ENCODE measurements at regions of chr6 and their contacts with region 1.

Region 1: DNA sequence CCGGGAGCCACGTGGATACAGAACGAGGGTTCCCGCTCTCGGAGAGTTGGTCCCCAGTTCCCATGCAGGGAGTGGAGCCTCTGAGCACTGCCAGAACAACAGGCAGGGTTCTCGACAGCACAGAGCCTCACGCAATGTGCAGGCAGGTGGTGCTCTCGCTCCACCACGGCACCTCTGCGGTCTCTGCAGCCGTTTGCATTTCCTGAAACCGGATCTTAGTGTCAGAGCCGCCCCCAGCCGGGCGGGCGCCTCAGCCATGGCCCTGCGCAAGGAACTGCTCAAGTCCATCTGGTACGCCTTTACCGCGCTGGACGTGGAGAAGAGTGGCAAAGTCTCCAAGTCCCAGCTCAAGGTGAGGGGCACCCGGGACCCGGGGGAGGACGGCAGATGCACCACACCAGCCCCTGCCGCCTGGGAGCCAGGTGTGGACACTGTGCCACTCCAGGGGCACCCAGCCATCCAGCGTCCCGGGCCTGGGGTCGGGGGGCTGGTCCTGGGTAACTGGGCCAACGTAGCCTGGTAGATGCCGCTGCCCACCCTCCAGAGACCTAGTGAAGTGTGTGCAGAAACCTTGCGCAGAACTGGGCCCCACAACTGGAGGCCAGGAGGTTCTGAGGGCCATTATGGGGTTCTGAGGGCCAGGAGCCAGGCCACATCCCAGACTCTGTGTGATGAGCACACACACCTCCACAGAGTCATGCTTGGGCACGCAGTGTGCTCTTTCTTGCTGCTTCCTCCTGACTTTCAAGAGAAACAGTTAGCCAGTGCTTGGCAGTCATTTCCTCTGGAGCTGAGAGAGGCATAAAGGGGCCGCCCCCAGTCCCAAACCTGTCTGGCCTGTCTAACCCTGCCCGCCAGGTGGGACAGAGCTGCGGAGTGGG is at the start of gene DEF6:
- DNase-seq: peak; percentile 90
- H3K4me3 ChIP-seq: peak within 1 kb of the TSS; percentile 66 to 85 (median 76)
- H3K27ac ChIP-seq: peak within 1 kb of the TSS; percentile 80
- H3K4me1 ChIP-seq: peaks cover 35% of the 10 kb centered on the region
- H3K27me3 ChIP-seq: no peaks in the 10 kb centered on the region
- CTCF ChIP-seq: peak; percentile 92 to 98
- total RNA-seq, gene DEF6: 12.8 to 32.9 TPM

Region 2: DNA sequence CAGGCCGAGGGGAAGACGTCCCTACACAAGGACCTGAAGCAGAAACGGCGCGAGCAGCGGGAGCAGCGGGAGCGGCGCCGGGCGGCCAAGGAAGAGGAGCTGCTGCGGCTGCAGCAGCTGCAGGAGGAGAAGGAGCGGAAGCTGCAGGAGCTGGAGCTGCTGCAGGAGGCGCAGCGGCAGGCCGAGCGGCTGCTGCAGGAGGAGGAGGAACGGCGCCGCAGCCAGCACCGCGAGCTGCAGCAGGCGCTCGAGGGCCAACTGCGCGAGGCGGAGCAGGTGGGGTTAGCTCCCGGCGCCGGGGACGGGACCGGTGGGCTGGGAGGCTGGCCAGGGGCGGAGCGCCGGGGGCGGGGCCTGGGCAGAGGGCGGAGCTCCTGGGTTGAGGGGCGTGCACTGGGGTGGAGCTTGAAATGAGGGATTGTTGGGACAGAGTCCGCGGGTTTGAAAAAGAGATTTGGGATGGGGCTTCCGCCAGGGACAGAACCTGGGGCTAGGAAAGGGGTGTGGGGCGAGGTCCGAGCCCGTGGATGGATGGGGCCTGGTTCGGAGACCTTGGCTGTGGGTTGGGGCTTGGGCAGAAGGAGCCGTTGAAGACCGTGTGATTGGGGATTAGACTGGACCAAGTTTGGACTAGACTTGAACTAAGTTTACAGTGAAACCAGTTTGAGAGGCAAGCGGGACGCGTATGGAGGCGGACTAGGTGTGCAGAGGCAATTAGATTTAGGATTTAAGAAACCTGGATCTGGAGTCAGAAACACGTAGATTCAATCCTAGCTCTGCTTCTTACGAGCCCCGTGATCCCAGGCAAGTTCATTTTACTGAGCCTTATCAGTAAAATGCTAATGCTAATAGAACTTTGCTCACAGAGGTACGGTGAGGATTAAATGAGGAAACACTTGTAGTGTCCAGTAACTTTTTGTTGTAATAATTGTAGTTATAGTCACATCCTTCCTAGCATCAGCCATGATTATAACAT is 20.6 kb after region 1 on chr6:
- CTCF ChIA-PET with region 1: no interaction called
- dilution Hi-C with region 1: no loop called
- in situ Hi-C with region 1: no loop called
- intact Hi-C with region 1: loop called (anchors 2 kb)
- DNase-seq: no peak
- H3K4me3 ChIP-seq: peak overlapping the region; percentile 0 to 30 (median 23)
- H3K27ac ChIP-seq: no peak overlapping the region
- H3K4me1 ChIP-seq: peaks cover 7% of the 10 kb centered on the region
- H3K27me3 ChIP-seq: no peaks in the 10 kb centered on the region
- CTCF ChIP-seq: no peak

Region 3: DNA sequence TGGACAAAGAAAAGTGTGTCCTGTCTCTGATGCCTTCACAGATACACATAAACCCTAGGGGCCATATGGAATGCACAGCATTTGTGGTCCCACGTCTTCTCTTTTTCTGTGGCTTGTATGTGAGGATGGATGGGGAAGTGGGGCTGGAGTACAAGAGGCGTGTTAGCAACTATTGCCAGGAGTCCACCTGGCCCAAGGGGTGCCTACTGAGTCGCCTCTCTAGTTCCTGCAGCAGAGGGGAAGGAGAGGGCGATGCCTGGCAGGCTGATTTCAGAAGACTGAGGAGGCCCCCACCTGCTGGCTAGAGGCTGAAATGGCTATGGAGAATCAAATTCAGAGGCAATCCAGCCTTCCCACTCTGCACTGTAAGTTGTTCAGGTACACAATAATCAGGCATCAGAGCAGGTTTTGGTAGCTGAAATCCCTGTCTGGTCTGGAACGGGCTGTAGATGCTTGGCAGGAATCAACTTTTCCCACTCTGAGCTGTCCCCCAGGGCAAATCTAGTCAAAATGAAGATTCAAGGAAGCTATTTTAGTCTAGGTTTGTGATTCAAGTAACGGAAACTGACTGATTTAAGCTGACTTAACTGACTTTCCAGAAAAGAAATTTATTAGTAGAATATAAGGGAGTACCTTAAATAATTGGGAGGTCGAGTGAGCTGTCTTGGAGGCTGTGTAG is 29.6 kb after region 1 on chr6:
- CTCF ChIA-PET with region 1: no interaction called
- dilution Hi-C with region 1: no loop called
- in situ Hi-C with region 1: no loop called
- intact Hi-C with region 1: loop called (anchors 1 kb)
- DNase-seq: peak; percentile 36
- H3K4me3 ChIP-seq: no peak overlapping the region
- H3K27ac ChIP-seq: no peak overlapping the region
- H3K4me1 ChIP-seq: no peaks in the 10 kb centered on the region
- H3K27me3 ChIP-seq: no peaks in the 10 kb centered on the region
- CTCF ChIP-seq: peak; percentile 47 to 74

Region 4: GRCh38 chr6:35552285-35552917 is 254.6 kb after region 1 on chr6:
- CTCF ChIA-PET with region 1: no interaction called
- dilution Hi-C with region 1: no loop called
- in situ Hi-C with region 1: no loop called
- intact Hi-C with region 1: loop called (anchors 2 kb)
- DNase-seq: peak; percentile 29
- H3K4me3 ChIP-seq: no peak overlapping the region
- H3K27ac ChIP-seq: no peak overlapping the region
- H3K4me1 ChIP-seq: no peaks in the 10 kb centered on the region
- H3K27me3 ChIP-seq: no peaks in the 10 kb centered on the region
- CTCF ChIP-seq: peak; percentile 89 to 99